ENCODE measurements at regions of chr1 and their contacts with region 1.

Region 1: DNA sequence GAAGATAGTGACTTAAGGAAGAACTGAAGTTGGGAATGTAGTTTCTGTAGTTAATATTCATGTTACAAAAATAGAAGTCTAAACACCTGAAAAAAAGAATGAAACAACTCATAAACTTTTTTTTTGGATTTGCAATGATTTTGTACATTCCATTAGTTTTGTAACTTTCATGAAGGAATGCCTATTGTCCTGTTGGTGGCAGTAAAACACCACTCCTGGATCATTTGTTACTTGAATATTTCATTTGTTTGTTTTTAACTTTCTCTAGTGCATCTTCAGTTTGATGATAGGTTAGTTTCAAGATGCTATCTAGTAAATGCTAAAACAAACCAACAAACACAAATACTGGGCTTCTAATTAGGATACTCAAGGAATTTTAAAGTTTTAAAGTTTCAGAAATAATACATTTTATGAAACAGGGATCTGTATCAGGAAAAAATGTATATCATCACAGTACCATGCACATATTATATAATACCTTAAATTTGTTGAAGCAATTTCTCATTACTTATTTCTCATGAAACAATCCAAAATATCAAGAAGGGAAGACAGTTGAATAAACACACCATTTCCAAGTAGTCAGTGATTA is 229.7 kb upstream of the CACYBP start:
- DNase-seq: peak in 1 of 2 donors; percentile 78
- H3K4me3 ChIP-seq: no peak overlapping the region
- H3K27ac ChIP-seq: no peak overlapping the region
- H3K4me1 ChIP-seq: peaks cover 0 to 5% (median 2%) of the 10 kb centered on the region in 4 donors
- H3K27me3 ChIP-seq: no peaks in the 10 kb centered on the region
- CTCF ChIP-seq: peak in 5 of 7 experiments; percentile 39 to 68 (median 58)
- EP300 ChIP-seq: no peak
- POLR2A ChIP-seq: no peak

Region 2: GRCh38 chr1:174850726-174851125 is 80.7 kb after region 1 on chr1:
- intact Hi-C with region 1: no loop called
- DNase-seq: no peak
- H3K4me3 ChIP-seq: no peak overlapping the region
- H3K27ac ChIP-seq: no peak overlapping the region
- H3K4me1 ChIP-seq: no peaks in the 10 kb centered on the region
- H3K27me3 ChIP-seq: no peaks in the 10 kb centered on the region
- CTCF ChIP-seq: no peak
- EP300 ChIP-seq: no peak
- POLR2A ChIP-seq: no peak

Region 3: GRCh38 chr1:174982971-174983689 is 213.1 kb after region 1 on chr1:
- intact Hi-C with region 1: loop called (anchors 10 kb)
- DNase-seq: peak in 1 of 2 donors; percentile 66
- H3K4me3 ChIP-seq: no peak overlapping the region
- H3K27ac ChIP-seq: no peak overlapping the region
- H3K4me1 ChIP-seq: no peaks in the 10 kb centered on the region
- H3K27me3 ChIP-seq: no peaks in the 10 kb centered on the region
- CTCF ChIP-seq: peak in 5 of 7 experiments; percentile 16 to 72 (median 43)
- EP300 ChIP-seq: no peak
- POLR2A ChIP-seq: no peak

Region 4: GRCh38 chr1:174999216-174999925 is 229.3 kb after region 1 on chr1:
- intact Hi-C with region 1: no loop called
- DNase-seq: peak; percentile 97 to 99
- H3K4me3 ChIP-seq: peak overlapping the region; percentile 87 to 98 (median 96)
- H3K27ac ChIP-seq: peak overlapping the region; percentile 94 to 98 (median 98)
- H3K4me1 ChIP-seq: peaks cover 3 to 57% (median 41%) of the 10 kb centered on the region in 4 donors
- H3K27me3 ChIP-seq: no peaks in the 10 kb centered on the region
- CTCF ChIP-seq: no peak
- EP300 ChIP-seq: peak; percentile 19
- POLR2A ChIP-seq: peak in 2 of 4 donors; percentile 67 to 76

Measured in stomach (tissue), 19 donors.